MCF 10A (cell line): ENCODE measurements at regions of chr2 and their contacts with region 1.

Region 1: GRCh38 chr2:169824373-169825333 is at the start of gene METTL5:
- DNase-seq: peak; percentile 83
- H3K4me3 Mint-ChIP-seq: peak within 1 kb of the TSS; percentile 81
- H3K27ac Mint-ChIP-seq: peak within 1 kb of the TSS; percentile 89
- H3K4me1 Mint-ChIP-seq: peaks cover 38% of the 10 kb centered on the region
- H3K27me3 Mint-ChIP-seq: no peaks in the 10 kb centered on the region
- CTCF ChIP-seq: peak; percentile 99
- total RNA-seq, gene METTL5: 68.0 and 109 TPM in 2 replicates

Region 2: GRCh38 chr2:169573160-169573973 is 251.3 kb before region 1 on chr2 and contains the start of gene FASTKD1:
- CTCF ChIA-PET with region 1: no interaction called
- POLR2A ChIA-PET with region 1: interaction called, 15 read pairs
- intact Hi-C with region 1: no loop called
- DNase-seq: peak; percentile 95
- H3K4me3 Mint-ChIP-seq: peak within 1 kb of the TSS; percentile 96
- H3K27ac Mint-ChIP-seq: peak within 1 kb of the TSS; percentile 74
- H3K4me1 Mint-ChIP-seq: peaks cover 8% of the 10 kb centered on the region
- H3K27me3 Mint-ChIP-seq: no peaks in the 10 kb centered on the region
- CTCF ChIP-seq: no peak
- total RNA-seq, gene FASTKD1: 34.5 and 39.9 TPM in 2 replicates

Region 3: GRCh38 chr2:169584005-169584877 is 240.4 kb before region 1 on chr2 and contains the start of gene PPIG:
- CTCF ChIA-PET with region 1: no interaction called
- POLR2A ChIA-PET with region 1: interaction called, 13 read pairs
- intact Hi-C with region 1: no loop called
- DNase-seq: peak; percentile 91
- H3K4me3 Mint-ChIP-seq: peak within 1 kb of the TSS; percentile 99
- H3K27ac Mint-ChIP-seq: peak within 1 kb of the TSS; percentile 98
- H3K4me1 Mint-ChIP-seq: no peaks in the 10 kb centered on the region
- H3K27me3 Mint-ChIP-seq: no peaks in the 10 kb centered on the region
- CTCF ChIP-seq: no peak
- total RNA-seq, gene PPIG: 64.7 and 80.2 TPM in 2 replicates

Region 4: DNA sequence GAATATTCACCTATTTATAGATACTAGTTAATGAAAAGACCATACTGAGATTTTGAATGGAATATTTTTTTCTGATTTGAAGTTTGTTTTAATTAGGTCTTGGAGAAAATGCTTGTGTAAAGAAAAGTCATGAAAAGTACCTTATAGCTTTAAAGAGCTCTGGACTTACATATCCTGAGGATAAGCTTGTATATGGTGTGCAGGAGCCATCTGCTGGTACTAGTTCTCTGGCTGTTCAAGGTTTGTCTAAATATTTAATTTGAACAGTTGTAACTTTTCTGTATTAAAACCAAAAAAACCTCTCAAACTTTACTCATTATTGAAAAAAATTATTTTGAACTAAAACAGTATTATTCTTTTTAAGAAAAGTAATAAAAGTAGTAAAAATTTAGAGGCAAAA is 52.7 kb after region 1 on chr2:
- CTCF ChIA-PET with region 1: interaction called, 15 read pairs
- POLR2A ChIA-PET with region 1: interaction called, 9 read pairs
- intact Hi-C with region 1: loop called (anchors 1 kb)
- DNase-seq: peak; percentile 18
- H3K4me3 Mint-ChIP-seq: no peak overlapping the region
- H3K27ac Mint-ChIP-seq: no peak overlapping the region
- H3K4me1 Mint-ChIP-seq: no peaks in the 10 kb centered on the region
- H3K27me3 Mint-ChIP-seq: no peaks in the 10 kb centered on the region
- CTCF ChIP-seq: peak; percentile 30

Region 5: DNA sequence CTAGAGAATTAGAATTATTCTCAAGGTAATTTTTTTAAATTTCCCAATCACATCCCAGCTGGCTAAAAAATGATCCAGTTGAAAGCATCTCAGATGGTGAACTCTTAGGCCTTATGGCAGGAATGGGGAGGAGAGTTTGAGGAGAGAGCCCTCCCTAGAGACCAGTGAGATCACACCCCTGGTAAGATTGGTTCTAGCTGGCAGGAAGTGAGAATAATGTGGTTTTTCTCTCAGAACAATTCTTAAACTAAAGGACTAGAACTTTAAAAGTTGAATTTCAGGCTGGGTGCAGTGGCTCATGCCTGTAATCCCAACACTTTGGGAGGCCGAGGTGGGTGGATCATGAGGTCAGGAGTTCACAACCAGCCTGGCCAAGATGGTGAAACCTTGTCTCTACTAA is 473.5 kb after region 1 on chr2:
- CTCF ChIA-PET with region 1: no interaction called
- POLR2A ChIA-PET with region 1: no interaction called
- intact Hi-C with region 1: no loop called
- DNase-seq: no peak
- H3K4me3 Mint-ChIP-seq: no peak overlapping the region
- H3K27ac Mint-ChIP-seq: no peak overlapping the region
- H3K4me1 Mint-ChIP-seq: no peaks in the 10 kb centered on the region
- H3K27me3 Mint-ChIP-seq: peaks cover 45% of the 10 kb centered on the region
- CTCF ChIP-seq: no peak